ENCODE measurements at regions of chr16 and their contacts with region 1.

Region 1: GRCh38 chr16:24988593-24989338 is 26.4 kb downstream of the ARHGAP17 start:
- DNase-seq: peak; percentile 68
- H3K4me3 Mint-ChIP-seq: peak overlapping the region; percentile 56
- H3K27ac Mint-ChIP-seq: peak overlapping the region; percentile 79
- H3K4me1 Mint-ChIP-seq: peaks cover 60% of the 10 kb centered on the region
- H3K27me3 Mint-ChIP-seq: no peaks in the 10 kb centered on the region
- CTCF ChIP-seq: no peak

Region 2: GRCh38 chr16:24975428-24975889 is 13.3 kb before region 1 on chr16:
- CTCF ChIA-PET with region 1: interaction called, 5 read pairs
- POLR2A ChIA-PET with region 1: interaction called, 34 read pairs
- intact Hi-C with region 1: no loop called
- DNase-seq: peak; percentile 77
- H3K4me3 Mint-ChIP-seq: no peak overlapping the region
- H3K27ac Mint-ChIP-seq: peak overlapping the region; percentile 59
- H3K4me1 Mint-ChIP-seq: peaks cover 29% of the 10 kb centered on the region
- H3K27me3 Mint-ChIP-seq: no peaks in the 10 kb centered on the region
- CTCF ChIP-seq: no peak

Region 3: GRCh38 chr16:24999856-25000461 is 11.2 kb after region 1 on chr16:
- CTCF ChIA-PET with region 1: interaction called, 4 read pairs
- POLR2A ChIA-PET with region 1: interaction called, 10 read pairs
- intact Hi-C with region 1: no loop called
- DNase-seq: no peak
- H3K4me3 Mint-ChIP-seq: no peak overlapping the region
- H3K27ac Mint-ChIP-seq: no peak overlapping the region
- H3K4me1 Mint-ChIP-seq: peaks cover 33% of the 10 kb centered on the region
- H3K27me3 Mint-ChIP-seq: no peaks in the 10 kb centered on the region
- CTCF ChIP-seq: no peak

Region 4: DNA sequence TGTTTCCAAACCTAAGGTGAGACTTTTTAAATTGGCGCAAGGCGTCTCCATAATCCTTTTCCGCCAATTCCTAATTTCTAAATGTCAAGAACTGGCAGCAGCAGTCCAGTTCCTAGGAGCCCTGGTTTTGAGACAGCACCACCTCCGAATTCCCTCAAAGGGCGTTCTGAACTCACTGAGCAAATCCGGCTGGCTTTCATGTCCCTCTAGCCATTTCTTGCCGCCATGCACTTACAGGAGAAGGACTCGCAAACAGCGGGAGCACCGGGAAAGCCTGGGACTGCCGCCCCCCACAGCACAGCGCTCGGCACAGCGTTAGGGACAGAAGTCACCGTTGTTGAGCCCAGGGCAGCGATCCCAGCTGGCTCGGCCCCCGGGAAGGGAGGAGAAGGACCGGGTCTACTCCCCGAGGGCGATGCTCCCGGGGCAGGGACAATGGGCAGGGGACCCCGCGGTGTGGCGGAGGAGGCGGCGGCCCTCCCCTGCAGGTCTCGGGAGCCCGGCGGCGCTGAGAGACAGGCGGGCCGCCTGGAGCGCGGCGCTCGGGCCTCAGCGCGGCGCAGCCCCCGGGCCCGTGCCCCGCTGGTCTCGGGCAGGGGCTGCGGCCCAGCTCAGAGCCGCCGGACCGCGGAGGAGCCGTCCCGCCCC is 25.9 kb after region 1 on chr16:
- CTCF ChIA-PET with region 1: interaction called, 5 read pairs
- POLR2A ChIA-PET with region 1: interaction called, 54 read pairs
- intact Hi-C with region 1: loop called (anchors 2 kb)
- DNase-seq: peak; percentile 49
- H3K4me3 Mint-ChIP-seq: peak overlapping the region; percentile 95
- H3K27ac Mint-ChIP-seq: peak overlapping the region; percentile 97
- H3K4me1 Mint-ChIP-seq: peaks cover 22% of the 10 kb centered on the region
- H3K27me3 Mint-ChIP-seq: no peaks in the 10 kb centered on the region
- CTCF ChIP-seq: no peak

Region 5: DNA sequence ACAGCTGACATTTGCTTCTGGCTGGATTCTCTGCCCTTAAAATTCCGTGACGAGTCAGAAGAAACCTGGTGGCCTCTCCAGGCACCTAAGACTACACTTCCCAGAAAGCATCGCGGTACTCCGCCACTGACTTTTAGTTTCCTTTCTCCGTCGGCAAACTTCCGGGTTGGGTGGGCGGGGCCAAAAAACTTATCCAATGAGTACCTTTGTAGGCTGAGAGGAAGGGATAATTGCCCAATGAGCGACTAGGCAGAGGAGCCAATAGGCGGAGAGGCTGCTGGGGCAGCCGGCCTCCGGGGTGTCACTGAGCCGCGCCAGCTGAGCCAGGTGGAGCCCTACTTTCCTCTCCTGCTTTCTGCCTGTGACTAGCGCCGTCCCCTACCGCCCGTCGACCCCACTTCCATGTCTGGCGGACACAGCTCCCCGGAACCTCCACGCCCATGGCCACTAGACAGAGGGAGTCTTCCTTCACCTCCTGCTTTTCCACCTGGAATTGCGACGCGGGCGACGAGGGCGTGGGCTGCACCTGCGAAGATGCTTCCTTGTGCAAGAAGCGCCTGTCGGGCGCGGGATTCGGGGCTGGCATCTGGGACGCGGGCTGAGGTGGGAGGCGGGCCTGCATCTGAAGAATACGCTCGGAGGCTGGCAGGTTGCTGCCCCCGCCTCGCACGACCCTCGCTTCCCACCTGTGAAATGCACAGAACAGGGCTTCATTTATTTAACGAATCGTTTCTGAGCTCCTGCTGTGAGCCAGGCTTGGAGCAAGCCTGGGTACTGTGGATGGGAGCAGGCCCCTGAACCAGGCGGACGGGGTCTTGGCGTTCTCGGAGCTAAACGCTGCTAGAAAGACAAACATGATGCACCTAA is 42.9 kb after region 1 on chr16:
- CTCF ChIA-PET with region 1: no interaction called
- POLR2A ChIA-PET with region 1: interaction called, 19 read pairs
- intact Hi-C with region 1: no loop called
- DNase-seq: peak; percentile 97
- H3K4me3 Mint-ChIP-seq: peak overlapping the region; percentile 94
- H3K27ac Mint-ChIP-seq: peak overlapping the region; percentile 88
- H3K4me1 Mint-ChIP-seq: peaks cover 5% of the 10 kb centered on the region
- H3K27me3 Mint-ChIP-seq: no peaks in the 10 kb centered on the region
- CTCF ChIP-seq: no peak

Measured in MCF 10A (cell line).